ENCODE measurements at regions of chr3 and their contacts with region 1.

Region 1: DNA sequence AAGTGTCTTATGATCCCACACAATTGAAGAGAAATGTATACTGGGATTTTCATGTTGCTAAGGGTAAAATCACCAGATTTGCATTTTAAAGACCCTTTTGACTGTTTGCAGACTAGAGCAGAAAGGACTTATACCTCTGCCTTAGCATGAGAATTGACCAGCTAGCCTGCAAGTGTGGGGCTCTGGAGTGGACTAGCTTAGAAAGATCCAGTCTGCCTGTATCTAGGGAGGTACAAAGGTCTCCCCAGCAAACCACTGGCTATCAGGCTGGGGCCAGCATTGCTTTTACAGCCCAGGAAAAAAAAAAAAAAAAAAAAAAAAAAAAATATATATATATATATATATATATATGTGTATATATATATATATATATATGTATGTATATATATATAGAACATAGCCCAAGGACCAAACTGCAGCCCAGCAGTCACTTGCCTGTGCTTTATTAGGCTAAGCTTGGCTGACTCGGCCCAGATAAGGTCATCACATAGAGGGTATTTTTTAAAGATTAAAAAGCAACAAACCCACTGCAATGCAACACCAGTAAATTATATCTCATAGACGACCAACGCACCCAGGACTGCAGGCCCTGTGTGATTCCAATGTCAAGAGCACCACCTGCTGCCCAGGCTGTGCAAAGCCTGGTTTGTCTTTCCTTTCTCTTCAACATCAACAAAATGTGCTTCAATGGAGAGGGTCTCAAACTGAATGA is 63.7 kb downstream of the DCLK3 start:
- DNase-seq: no peak

Region 2: DNA sequence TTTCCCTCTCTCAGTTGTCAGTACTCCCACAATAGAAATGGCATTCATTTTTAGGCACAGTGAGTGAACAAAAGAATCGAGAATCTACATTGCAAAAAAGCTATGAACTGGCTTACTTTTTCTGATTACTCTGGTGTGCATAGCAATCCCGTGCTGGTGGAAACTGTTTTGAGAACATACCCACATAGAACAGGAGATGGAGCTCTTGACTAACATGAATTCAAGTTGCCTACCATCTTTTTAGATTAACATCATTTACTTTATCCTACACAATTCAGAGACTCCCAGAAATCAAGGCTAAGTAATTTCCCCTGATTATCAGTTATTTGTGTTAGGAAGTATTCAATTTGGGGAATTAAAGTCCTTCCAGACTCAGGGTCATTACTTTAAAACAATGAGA is 734.8 kb before region 1 on chr3:
- intact Hi-C with region 1: loop called (anchors 2 kb)
- DNase-seq: no peak

Measured in cardiac septum (tissue), 1 donor.